Activated CD4-positive, alpha-beta memory T cell treated with anti-CD3 and anti-CD28 coated beads for 36 hours (primary cell): ENCODE measurements at regions of chr11 and their contacts with region 1.

Region 1: GRCh38 chr11:82718307-82718706 is 15.4 kb downstream of the FAM181B start:
- DNase-seq: no peak
- H3K4me3 Mint-ChIP-seq: no peak overlapping the region
- H3K27ac Mint-ChIP-seq: no peak overlapping the region
- H3K4me1 Mint-ChIP-seq: no peaks in the 10 kb centered on the region
- H3K27me3 Mint-ChIP-seq: no peaks in the 10 kb centered on the region

Region 2: GRCh38 chr11:82775736-82776346 is 57.5 kb after region 1 on chr11:
- CTCF ChIA-PET with region 1: interaction called, 4 read pairs
- POLR2A ChIA-PET with region 1: no interaction called
- intact Hi-C with region 1: loop called (anchors 10 kb)
- DNase-seq: peak; percentile 57
- H3K4me3 Mint-ChIP-seq: no peak overlapping the region
- H3K27ac Mint-ChIP-seq: no peak overlapping the region
- H3K4me1 Mint-ChIP-seq: no peaks in the 10 kb centered on the region
- H3K27me3 Mint-ChIP-seq: peaks cover 7% of the 10 kb centered on the region

Region 3: DNA sequence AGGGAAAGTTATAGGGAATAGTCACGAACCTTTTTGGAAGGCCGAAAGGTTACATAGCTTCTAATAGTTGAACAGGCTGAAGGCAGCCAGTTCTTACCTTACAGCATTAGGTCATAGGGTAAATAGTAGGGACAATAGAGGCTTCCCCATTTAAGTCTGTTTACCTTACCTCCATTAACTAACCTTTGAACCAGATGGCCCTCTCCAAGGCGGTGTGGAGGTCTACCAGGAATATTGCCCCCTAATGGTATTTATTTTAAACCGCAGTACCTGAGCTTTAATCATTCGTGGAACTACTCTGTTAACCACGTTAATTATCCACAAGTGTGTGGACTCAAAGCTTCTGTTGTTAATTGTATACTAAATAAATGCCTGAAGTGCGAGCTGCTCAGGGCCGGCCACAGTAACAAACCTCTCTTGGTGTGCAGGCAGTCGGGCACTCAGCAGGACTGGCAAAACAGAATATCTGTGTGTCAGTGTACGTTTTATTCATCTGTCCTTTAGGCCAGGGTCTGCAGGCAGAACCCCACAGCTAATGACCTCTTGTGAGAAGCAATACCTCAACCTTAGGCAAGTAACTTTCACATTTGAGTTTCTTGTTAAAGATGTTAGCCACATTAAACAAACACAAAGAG is 100.2 kb after region 1 on chr11:
- CTCF ChIA-PET with region 1: interaction called, 5 read pairs
- POLR2A ChIA-PET with region 1: no interaction called
- intact Hi-C with region 1: loop called (anchors 5 kb)
- DNase-seq: no peak
- H3K4me3 Mint-ChIP-seq: no peak overlapping the region
- H3K27ac Mint-ChIP-seq: no peak overlapping the region
- H3K4me1 Mint-ChIP-seq: no peaks in the 10 kb centered on the region
- H3K27me3 Mint-ChIP-seq: peaks cover 9% of the 10 kb centered on the region

Region 4: GRCh38 chr11:83819933-83820549 is 1101.7 kb after region 1 on chr11:
- CTCF ChIA-PET with region 1: interaction called, 8 read pairs
- POLR2A ChIA-PET with region 1: no interaction called
- intact Hi-C with region 1: loop called (anchors 2 kb)
- DNase-seq: no peak
- H3K4me3 Mint-ChIP-seq: no peak overlapping the region
- H3K27ac Mint-ChIP-seq: no peak overlapping the region
- H3K4me1 Mint-ChIP-seq: no peaks in the 10 kb centered on the region
- H3K27me3 Mint-ChIP-seq: peaks cover 2% of the 10 kb centered on the region